IMR-90 (cell line): ENCODE measurements at regions of chr5 and their contacts with region 1.

Region 1: GRCh38 chr5:91607675-91608074 is 224.6 kb upstream of the ARRDC3 start:
- DNase-seq: no peak
- ATAC-seq: no peak
- H3K4me3 ChIP-seq: no peak overlapping the region
- H3K27ac ChIP-seq: no peak overlapping the region
- H3K4me1 ChIP-seq: no peaks in the 10 kb centered on the region
- H3K27me3 ChIP-seq: no peaks in the 10 kb centered on the region
- CTCF ChIP-seq: no peak
- POLR2A ChIP-seq: no peak
- RAD21 ChIP-seq: no peak

Region 2: GRCh38 chr5:91668261-91668660 is 60.6 kb after region 1 on chr5:
- CTCF ChIA-PET with region 1: no interaction called
- POLR2A ChIA-PET with region 1: no interaction called
- dilution Hi-C with region 1: no loop called
- in situ Hi-C with region 1: no loop called
- intact Hi-C with region 1: loop called (anchors 5 kb)
- DNase-seq: no peak
- ATAC-seq: no peak
- H3K4me3 ChIP-seq: no peak overlapping the region
- H3K27ac ChIP-seq: no peak overlapping the region
- H3K4me1 ChIP-seq: no peaks in the 10 kb centered on the region
- H3K27me3 ChIP-seq: no peaks in the 10 kb centered on the region
- CTCF ChIP-seq: no peak
- POLR2A ChIP-seq: no peak
- RAD21 ChIP-seq: no peak

Region 3: GRCh38 chr5:92444888-92445287 is 837.2 kb after region 1 on chr5:
- CTCF ChIA-PET with region 1: no interaction called
- POLR2A ChIA-PET with region 1: no interaction called
- dilution Hi-C with region 1: no loop called
- in situ Hi-C with region 1: no loop called
- intact Hi-C with region 1: no loop called
- DNase-seq: no peak
- ATAC-seq: no peak
- H3K4me3 ChIP-seq: no peak overlapping the region
- H3K27ac ChIP-seq: no peak overlapping the region
- H3K4me1 ChIP-seq: no peaks in the 10 kb centered on the region
- H3K27me3 ChIP-seq: no peaks in the 10 kb centered on the region
- CTCF ChIP-seq: no peak
- POLR2A ChIP-seq: no peak
- RAD21 ChIP-seq: no peak